Activated T-helper 1 cell treated with anti-CD3 and anti-CD28 coated beads, Interleukin-12 subunit alpha, Interleukin-12 subunit beta, Interleukin-2, Interleukin-4 antibody, amounts not matched to agents 30 ng/mL and 10 ng/mL and 1 ng/mL, durations not matched to agents 14 hours and 24 hours and 36 hours (primary cell): ENCODE measurements at regions of chr3 and their contacts with region 1.

Region 1: GRCh38 chr3:132416807-132417694 is at the start of gene DNAJC13:
- DNase-seq: peak; percentile 90
- H3K4me3 Mint-ChIP-seq: peak within 1 kb of the TSS; percentile 100
- H3K27ac Mint-ChIP-seq: peak within 1 kb of the TSS; percentile 98
- H3K4me1 Mint-ChIP-seq: peaks cover 31% of the 10 kb centered on the region
- H3K27me3 Mint-ChIP-seq: no peaks in the 10 kb centered on the region
- total RNA-seq, gene DNAJC13: 30.2 and 34.0 TPM in 2 replicates

Region 2: GRCh38 chr3:131026321-131027178 is 1390.5 kb before region 1 on chr3 and contains the starts of genes ASTE1 and NEK11:
- intact Hi-C with region 1: loop called (anchors 5 kb)
- DNase-seq: peak; percentile 88
- H3K4me3 Mint-ChIP-seq: peak within 1 kb of the TSS; percentile 91
- H3K27ac Mint-ChIP-seq: peak within 1 kb of the TSS; percentile 94
- H3K4me1 Mint-ChIP-seq: peaks cover 47% of the 10 kb centered on the region
- H3K27me3 Mint-ChIP-seq: no peaks in the 10 kb centered on the region
- total RNA-seq, gene ASTE1: 9.6 and 14.6 TPM in 2 replicates
- total RNA-seq, gene NEK11: 0.51 and 1.2 TPM in 2 replicates

Region 3: GRCh38 chr3:132435911-132436425 is 18.9 kb after region 1 on chr3:
- intact Hi-C with region 1: loop called (anchors 1 kb)
- DNase-seq: no peak
- H3K4me3 Mint-ChIP-seq: no peak overlapping the region
- H3K27ac Mint-ChIP-seq: no peak overlapping the region
- H3K4me1 Mint-ChIP-seq: peaks cover 12% of the 10 kb centered on the region
- H3K27me3 Mint-ChIP-seq: no peaks in the 10 kb centered on the region

Region 4: DNA sequence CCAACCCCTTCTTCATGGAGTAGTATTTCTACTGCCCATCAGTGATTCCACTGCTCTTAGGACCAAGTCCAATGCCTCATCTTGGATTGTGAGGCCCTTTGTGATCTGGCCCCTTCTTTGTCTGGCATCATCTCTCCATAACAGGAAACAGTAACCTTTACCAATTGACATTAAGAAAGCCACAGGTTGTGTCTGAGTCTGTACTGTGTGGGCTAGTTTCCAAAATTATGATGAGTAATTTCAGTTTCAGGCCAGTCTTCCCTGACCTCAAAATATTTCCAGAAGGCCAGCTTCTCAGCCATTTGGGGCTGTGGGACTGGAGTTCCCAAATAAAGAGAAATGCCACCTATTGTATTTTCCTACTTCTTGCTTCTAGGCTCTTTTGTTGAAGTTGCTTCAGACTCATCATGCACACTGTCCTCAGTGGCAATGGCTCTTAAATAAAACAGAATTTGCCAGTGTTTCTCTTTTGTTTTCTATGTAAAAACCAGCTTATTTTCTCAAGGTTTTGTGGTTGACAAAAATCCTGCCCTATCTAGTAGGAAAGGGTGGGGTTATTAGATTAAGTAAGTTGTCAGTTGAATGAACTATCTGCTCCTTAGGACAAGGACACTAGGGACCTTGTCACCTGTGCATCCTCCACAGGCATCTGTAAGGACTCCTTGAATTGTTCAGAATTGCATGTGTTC is 133.0 kb after region 1 on chr3:
- intact Hi-C with region 1: loop called (anchors 1 kb)
- DNase-seq: no peak
- H3K4me3 Mint-ChIP-seq: peak overlapping the region; percentile 69
- H3K27ac Mint-ChIP-seq: peak overlapping the region; percentile 95
- H3K4me1 Mint-ChIP-seq: peaks cover 63% of the 10 kb centered on the region
- H3K27me3 Mint-ChIP-seq: no peaks in the 10 kb centered on the region

Region 5: DNA sequence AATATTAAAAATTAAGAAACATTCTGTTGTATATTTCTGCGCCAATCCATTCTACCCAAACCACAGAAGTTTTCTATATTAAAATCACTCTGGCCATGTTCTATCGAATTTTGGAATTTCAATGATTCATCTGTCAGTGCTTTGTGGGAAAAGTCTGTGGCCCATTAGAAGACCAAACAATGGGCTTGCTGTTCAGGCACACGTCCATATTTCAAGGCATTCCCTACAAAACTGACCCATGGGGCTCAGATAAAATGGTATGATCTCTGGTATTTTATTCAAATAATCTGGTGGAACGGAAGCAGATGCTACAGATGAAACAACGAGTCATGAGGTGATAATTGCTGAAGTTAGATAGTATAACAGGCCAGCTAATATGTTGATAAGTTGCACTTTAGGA is 292.7 kb after region 1 on chr3:
- intact Hi-C with region 1: no loop called
- DNase-seq: no peak
- H3K4me3 Mint-ChIP-seq: no peak overlapping the region
- H3K27ac Mint-ChIP-seq: no peak overlapping the region
- H3K4me1 Mint-ChIP-seq: no peaks in the 10 kb centered on the region
- H3K27me3 Mint-ChIP-seq: no peaks in the 10 kb centered on the region

Region 6: DNA sequence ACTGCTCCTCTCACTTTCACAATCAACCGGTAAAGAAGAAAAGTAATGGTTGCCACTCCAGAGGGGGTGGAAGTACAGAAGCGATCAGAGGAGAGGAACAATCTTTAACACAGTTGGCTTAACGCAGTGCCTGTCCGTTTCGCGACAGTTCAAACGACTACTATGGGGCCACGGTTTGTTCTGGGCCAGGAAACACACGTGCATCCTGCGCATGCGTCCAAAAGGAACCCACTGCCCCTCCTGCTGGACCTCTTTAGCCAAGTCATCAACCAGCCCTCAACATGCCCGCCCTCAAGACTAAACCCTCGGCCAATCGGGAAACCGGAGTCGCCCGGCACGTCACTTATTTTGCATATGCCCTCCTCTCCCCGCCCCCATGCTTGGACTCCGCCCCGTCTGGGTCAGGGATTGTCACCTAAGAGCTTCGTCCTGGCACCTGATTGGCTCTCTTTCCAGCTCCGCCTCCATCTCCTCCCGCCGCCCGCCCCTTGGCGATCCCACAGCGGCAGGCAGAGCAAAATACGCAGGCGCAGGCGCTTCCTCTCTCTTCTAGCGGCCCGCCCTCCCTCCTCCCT is 1156.1 kb after region 1 on chr3:
- intact Hi-C with region 1: loop called (anchors 1 kb)
- DNase-seq: peak; percentile 100
- H3K4me3 Mint-ChIP-seq: peak overlapping the region; percentile 84
- H3K27ac Mint-ChIP-seq: peak overlapping the region; percentile 98
- H3K4me1 Mint-ChIP-seq: peaks cover 60% of the 10 kb centered on the region
- H3K27me3 Mint-ChIP-seq: peaks cover 2% of the 10 kb centered on the region